CD8-positive, alpha-beta T cell (primary cell): ENCODE measurements at regions of chr11 and their contacts with region 1.

Region 1: DNA sequence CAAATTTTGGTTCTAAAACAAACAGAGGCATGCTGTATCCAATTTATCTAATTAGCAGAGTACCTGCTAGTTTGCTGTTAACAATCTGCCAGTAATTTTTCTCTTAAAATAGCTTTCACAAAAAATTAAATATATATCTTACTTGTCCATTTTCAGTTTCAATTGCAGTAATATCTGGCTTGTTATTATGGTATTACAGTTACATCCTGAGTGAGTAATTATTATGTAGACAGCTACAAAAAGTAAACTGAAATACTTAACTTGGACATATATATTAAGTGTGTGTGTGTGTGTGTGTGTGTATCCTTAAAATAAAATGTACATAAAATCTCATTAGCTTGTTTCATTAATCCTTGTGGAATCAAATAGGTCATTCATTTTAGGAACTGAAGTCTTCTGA is 148.7 kb downstream of the LUZP2 start:
- DNase-seq: no peak
- ATAC-seq: no peak
- H3K4me3 ChIP-seq: no peak overlapping the region
- H3K4me3 Mint-ChIP-seq: no peak overlapping the region
- H3K27ac ChIP-seq: no peak overlapping the region
- H3K27ac Mint-ChIP-seq: no peak overlapping the region
- H3K4me1 ChIP-seq: no peaks in the 10 kb centered on the region
- H3K4me1 Mint-ChIP-seq: no peaks in the 10 kb centered on the region
- H3K27me3 ChIP-seq: no peaks in the 10 kb centered on the region
- H3K27me3 Mint-ChIP-seq: no peaks in the 10 kb centered on the region
- CTCF ChIP-seq: no peak

Region 2: GRCh38 chr11:24609192-24610119 is 36.1 kb before region 1 on chr11:
- CTCF ChIA-PET with region 1: no interaction called
- POLR2A ChIA-PET with region 1: no interaction called
- intact Hi-C with region 1: loop called in 1 of 2 experiments (anchors 5 kb)
- DNase-seq: no peak
- ATAC-seq: no peak
- H3K4me3 ChIP-seq: no peak overlapping the region
- H3K4me3 Mint-ChIP-seq: no peak overlapping the region
- H3K27ac ChIP-seq: no peak overlapping the region
- H3K27ac Mint-ChIP-seq: no peak overlapping the region
- H3K4me1 ChIP-seq: no peaks in the 10 kb centered on the region
- H3K4me1 Mint-ChIP-seq: no peaks in the 10 kb centered on the region
- H3K27me3 ChIP-seq: no peaks in the 10 kb centered on the region
- H3K27me3 Mint-ChIP-seq: no peaks in the 10 kb centered on the region
- CTCF ChIP-seq: no peak